ENCODE measurements at regions of chr1 and their contacts with region 1.

Region 1: DNA sequence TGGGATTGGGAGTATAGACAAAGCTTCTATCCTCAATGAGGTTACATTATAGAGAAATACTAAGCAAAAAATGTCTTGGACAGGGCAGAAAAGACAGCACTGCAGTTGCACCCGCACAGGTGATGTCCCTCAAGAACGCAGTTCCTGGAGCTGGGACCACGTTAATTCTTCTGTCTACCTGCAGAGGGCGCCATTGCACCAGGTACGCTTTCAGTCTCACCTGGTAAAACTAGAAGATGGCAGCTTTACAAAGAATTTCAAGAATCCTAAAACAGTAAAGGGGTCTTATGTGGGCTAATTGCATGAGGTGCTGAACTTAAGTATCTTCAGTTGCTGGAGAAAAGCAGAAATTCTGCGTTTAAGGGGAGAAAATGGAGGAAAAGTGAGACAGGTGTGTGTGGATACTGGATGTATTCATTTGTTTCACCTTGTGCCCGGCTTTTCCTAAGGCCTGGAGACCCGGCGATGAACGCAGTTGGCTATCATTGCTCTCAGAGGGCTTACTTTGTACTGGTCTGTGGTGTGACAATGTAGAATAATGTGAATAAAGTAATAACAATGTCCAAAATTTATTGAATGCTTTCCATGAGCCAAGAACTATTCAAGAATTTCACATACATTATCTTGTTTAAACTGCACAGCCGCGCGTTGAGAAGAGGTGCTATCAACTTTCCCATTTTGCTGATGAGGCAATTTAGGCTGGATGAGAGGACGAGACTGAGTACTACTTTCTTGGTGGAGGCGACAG is 276.3 kb upstream of the GREM2 start:
- DNase-seq: peak; percentile 88
- H3K4me3 Mint-ChIP-seq: no peak overlapping the region
- H3K27ac Mint-ChIP-seq: no peak overlapping the region
- H3K4me1 Mint-ChIP-seq: peaks cover 5% of the 10 kb centered on the region
- H3K27me3 Mint-ChIP-seq: no peaks in the 10 kb centered on the region
- CTCF ChIP-seq: peak; percentile 100

Region 2: GRCh38 chr1:240515505-240515904 is 372.7 kb before region 1 on chr1:
- CTCF ChIA-PET with region 1: no interaction called
- POLR2A ChIA-PET with region 1: no interaction called
- intact Hi-C with region 1: no loop called
- DNase-seq: no peak
- H3K4me3 Mint-ChIP-seq: no peak overlapping the region
- H3K27ac Mint-ChIP-seq: no peak overlapping the region
- H3K4me1 Mint-ChIP-seq: no peaks in the 10 kb centered on the region
- H3K27me3 Mint-ChIP-seq: no peaks in the 10 kb centered on the region
- CTCF ChIP-seq: no peak

Region 3: GRCh38 chr1:240739139-240739538 is 149.1 kb before region 1 on chr1:
- CTCF ChIA-PET with region 1: interaction called, 21 read pairs
- POLR2A ChIA-PET with region 1: no interaction called
- intact Hi-C with region 1: no loop called
- DNase-seq: no peak
- H3K4me3 Mint-ChIP-seq: no peak overlapping the region
- H3K27ac Mint-ChIP-seq: no peak overlapping the region
- H3K4me1 Mint-ChIP-seq: peaks cover 4% of the 10 kb centered on the region
- H3K27me3 Mint-ChIP-seq: no peaks in the 10 kb centered on the region
- CTCF ChIP-seq: no peak

Region 4: GRCh38 chr1:240821925-240822324 is 66.3 kb before region 1 on chr1:
- CTCF ChIA-PET with region 1: no interaction called
- POLR2A ChIA-PET with region 1: no interaction called
- intact Hi-C with region 1: no loop called
- DNase-seq: no peak
- H3K4me3 Mint-ChIP-seq: no peak overlapping the region
- H3K27ac Mint-ChIP-seq: no peak overlapping the region
- H3K4me1 Mint-ChIP-seq: no peaks in the 10 kb centered on the region
- H3K27me3 Mint-ChIP-seq: no peaks in the 10 kb centered on the region
- CTCF ChIP-seq: no peak

Region 5: DNA sequence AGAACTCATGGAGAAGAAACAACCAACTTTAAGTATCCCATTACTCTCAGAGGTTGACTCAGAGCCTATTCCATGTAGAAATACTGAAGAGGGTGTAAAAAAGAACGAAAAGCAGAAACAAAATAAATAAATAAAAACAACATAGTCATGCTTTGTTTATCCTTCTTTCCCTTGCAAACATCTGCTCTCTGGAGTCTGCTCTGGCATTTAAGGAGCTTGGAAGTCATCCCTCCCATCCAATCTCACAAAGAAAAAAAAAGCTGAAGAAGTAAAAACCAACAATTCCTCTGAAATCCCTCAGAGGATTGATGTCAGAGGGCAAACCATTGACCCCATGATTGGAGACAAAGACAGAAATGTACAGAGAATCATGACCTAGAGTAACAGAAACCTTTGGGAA is 26.3 kb after region 1 on chr1:
- CTCF ChIA-PET with region 1: interaction called, 16 read pairs
- POLR2A ChIA-PET with region 1: no interaction called
- intact Hi-C with region 1: no loop called
- DNase-seq: no peak
- H3K4me3 Mint-ChIP-seq: no peak overlapping the region
- H3K27ac Mint-ChIP-seq: no peak overlapping the region
- H3K4me1 Mint-ChIP-seq: no peaks in the 10 kb centered on the region
- H3K27me3 Mint-ChIP-seq: no peaks in the 10 kb centered on the region
- CTCF ChIP-seq: no peak

Region 6: GRCh38 chr1:240967070-240967724 is 79.0 kb after region 1 on chr1:
- CTCF ChIA-PET with region 1: interaction called, 20 read pairs
- POLR2A ChIA-PET with region 1: no interaction called
- intact Hi-C with region 1: loop called (anchors 5 kb)
- DNase-seq: peak; percentile 60
- H3K4me3 Mint-ChIP-seq: no peak overlapping the region
- H3K27ac Mint-ChIP-seq: no peak overlapping the region
- H3K4me1 Mint-ChIP-seq: no peaks in the 10 kb centered on the region
- H3K27me3 Mint-ChIP-seq: no peaks in the 10 kb centered on the region
- CTCF ChIP-seq: peak; percentile 76

Region 7: GRCh38 chr1:241485554-241485992 is 597.4 kb after region 1 on chr1:
- CTCF ChIA-PET with region 1: interaction called, 106 read pairs
- POLR2A ChIA-PET with region 1: interaction called, 7 read pairs
- intact Hi-C with region 1: loop called (anchors 1 kb)
- DNase-seq: peak; percentile 64
- H3K4me3 Mint-ChIP-seq: no peak overlapping the region
- H3K27ac Mint-ChIP-seq: no peak overlapping the region
- H3K4me1 Mint-ChIP-seq: peaks cover 26% of the 10 kb centered on the region
- H3K27me3 Mint-ChIP-seq: no peaks in the 10 kb centered on the region
- CTCF ChIP-seq: peak; percentile 63

Region 8: GRCh38 chr1:241627453-241628259 is 739.4 kb after region 1 on chr1:
- CTCF ChIA-PET with region 1: interaction called, 5 read pairs
- POLR2A ChIA-PET with region 1: no interaction called
- intact Hi-C with region 1: loop called (anchors 1 kb)
- DNase-seq: peak; percentile 92
- H3K4me3 Mint-ChIP-seq: no peak overlapping the region
- H3K27ac Mint-ChIP-seq: peak overlapping the region; percentile 52
- H3K4me1 Mint-ChIP-seq: peaks cover 58% of the 10 kb centered on the region
- H3K27me3 Mint-ChIP-seq: no peaks in the 10 kb centered on the region
- CTCF ChIP-seq: peak; percentile 80

Measured in MCF 10A (cell line).